ENCODE measurements at regions of chr1 and their contacts with region 1.

Region 1: DNA sequence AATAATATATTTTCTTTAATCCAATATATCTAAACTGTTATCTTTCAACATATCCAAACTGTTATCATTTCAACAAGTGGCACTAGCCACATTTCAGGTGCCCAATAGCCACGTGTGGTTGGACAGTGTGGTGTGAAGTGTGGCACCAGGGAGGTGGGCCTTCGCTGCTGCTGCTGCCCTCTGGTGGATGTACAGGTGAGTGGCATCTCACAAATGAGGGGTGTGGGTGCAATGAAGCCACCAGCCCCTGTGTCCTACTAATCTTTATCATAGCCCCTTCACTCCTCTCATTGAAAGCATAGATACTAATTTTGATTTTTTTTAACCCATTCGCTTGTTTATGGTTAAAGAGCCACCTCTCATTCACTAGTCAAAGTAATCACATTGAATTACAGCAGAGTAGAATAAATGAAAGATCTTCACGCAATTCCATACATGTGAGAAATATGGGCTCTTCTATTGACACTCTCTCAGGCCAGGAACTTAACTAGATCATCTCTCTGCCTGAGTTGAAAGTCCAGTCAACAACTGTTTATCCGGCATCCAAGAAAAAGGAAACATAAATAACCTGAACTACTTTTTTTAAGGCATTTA is 499.2 kb downstream of the OMA1 start:
- DNase-seq: no peak

Region 2: GRCh38 chr1:56831871-56832693 is 1215.3 kb before region 1 on chr1:
- intact Hi-C with region 1: loop called in 1 of 2 experiments (anchors 10 kb)
- DNase-seq: peak; percentile 84